CD14-positive monocyte (primary cell): ENCODE measurements at regions of chr17 and their contacts with region 1.

Region 1: GRCh38 chr17:31274252-31274651 is 22.8 kb downstream of the OMG start:
- DNase-seq: peak; percentile 46 to 81 (median 69)
- H3K4me3 ChIP-seq: peak overlapping the region in 1 of 3 experiments; percentile 54
- H3K4me3 Mint-ChIP-seq: peak overlapping the region in 1 of 2 donors; percentile 71
- H3K27ac ChIP-seq: peak overlapping the region in 1 of 2 donors; percentile 82
- H3K27ac Mint-ChIP-seq: peak overlapping the region; percentile 81 to 93 (median 90)
- H3K4me1 ChIP-seq: peaks cover 19 to 38% of the 10 kb centered on the region in 2 donors
- H3K4me1 Mint-ChIP-seq: peaks cover 34% of the 10 kb centered on the region
- H3K27me3 ChIP-seq: no peaks in the 10 kb centered on the region
- H3K27me3 Mint-ChIP-seq: no peaks in the 10 kb centered on the region
- CTCF ChIP-seq: no peak

Region 2: DNA sequence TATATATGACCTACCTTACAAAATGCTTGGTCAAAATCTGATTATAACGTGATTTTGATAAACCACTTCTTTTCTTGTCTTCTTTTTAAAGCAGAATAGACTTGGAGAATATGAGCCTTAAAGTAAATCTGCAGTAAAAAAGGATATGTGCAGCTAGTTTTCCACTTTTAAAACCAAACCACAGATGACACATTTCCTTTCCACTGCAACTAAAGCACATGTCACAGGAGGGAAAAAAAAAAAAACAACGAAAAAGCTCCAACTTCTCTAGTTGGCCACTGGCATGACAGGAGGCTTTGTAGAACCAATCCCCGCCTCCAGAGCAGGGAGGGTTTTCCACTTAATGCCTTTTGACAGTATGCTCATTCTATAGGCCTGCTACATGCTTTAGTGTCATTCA is 47.2 kb after region 1 on chr17 and contains the start of gene EVI2A:
- intact Hi-C with region 1: loop called in 1 of 2 experiments (anchors 10 kb)
- DNase-seq: peak; percentile 88 to 94 (median 92)
- H3K4me3 ChIP-seq: peak within 1 kb of the TSS; percentile 90 to 100 (median 96)
- H3K4me3 Mint-ChIP-seq: peak within 1 kb of the TSS; percentile 72 to 88
- H3K27ac ChIP-seq: peak within 1 kb of the TSS; percentile 29 to 98
- H3K27ac Mint-ChIP-seq: peak within 1 kb of the TSS; percentile 84 to 95 (median 89)
- H3K4me1 ChIP-seq: peaks cover 24 to 40% of the 10 kb centered on the region in 2 donors
- H3K4me1 Mint-ChIP-seq: peaks cover 25% of the 10 kb centered on the region
- H3K27me3 ChIP-seq: no peaks in the 10 kb centered on the region
- H3K27me3 Mint-ChIP-seq: no peaks in the 10 kb centered on the region
- CTCF ChIP-seq: no peak
- polyA plus RNA-seq, gene EVI2A: 121 to 138 (median 125) TPM